Activated naive CD4-positive, alpha-beta T cell treated with anti-CD3 and anti-CD28 coated beads for 36 hours (primary cell): ENCODE measurements at regions of chr7 and their contacts with region 1.

Region 1: GRCh38 chr7:103074519-103075336 is at the starts of genes ARMC10 and FBXL13:
- DNase-seq: peak; percentile 92
- H3K4me3 Mint-ChIP-seq: peak within 1 kb of the TSS; percentile 91
- H3K27ac Mint-ChIP-seq: peak within 1 kb of the TSS; percentile 90
- H3K4me1 Mint-ChIP-seq: peaks cover 40% of the 10 kb centered on the region
- H3K27me3 Mint-ChIP-seq: no peaks in the 10 kb centered on the region
- total RNA-seq, gene ARMC10: 46.6 to 50.5 TPM
- total RNA-seq, gene FBXL13: 0.54 to 0.74 TPM

Region 2: GRCh38 chr7:103129702-103130549 is 55.2 kb after region 1 on chr7:
- CTCF ChIA-PET with region 1: no interaction called
- intact Hi-C with region 1: no loop called
- DNase-seq: no peak
- H3K4me3 Mint-ChIP-seq: no peak overlapping the region
- H3K27ac Mint-ChIP-seq: no peak overlapping the region
- H3K4me1 Mint-ChIP-seq: peaks cover 10% of the 10 kb centered on the region
- H3K27me3 Mint-ChIP-seq: no peaks in the 10 kb centered on the region

Region 3: GRCh38 chr7:103148994-103149807 is 74.5 kb after region 1 on chr7 and contains the start of gene NAPEPLD:
- CTCF ChIA-PET with region 1: interaction called, 3 read pairs
- intact Hi-C with region 1: loop called (anchors 1 kb)
- DNase-seq: peak; percentile 68
- H3K4me3 Mint-ChIP-seq: peak within 1 kb of the TSS; percentile 96
- H3K27ac Mint-ChIP-seq: peak within 1 kb of the TSS; percentile 97
- H3K4me1 Mint-ChIP-seq: peaks cover 32% of the 10 kb centered on the region
- H3K27me3 Mint-ChIP-seq: no peaks in the 10 kb centered on the region
- total RNA-seq, gene NAPEPLD: 6.3 to 6.8 TPM

Region 4: GRCh38 chr7:103396471-103396870 is 321.7 kb after region 1 on chr7:
- CTCF ChIA-PET with region 1: no interaction called
- intact Hi-C with region 1: loop called (anchors 10 kb)
- DNase-seq: no peak
- H3K4me3 Mint-ChIP-seq: no peak overlapping the region
- H3K27ac Mint-ChIP-seq: no peak overlapping the region
- H3K4me1 Mint-ChIP-seq: no peaks in the 10 kb centered on the region
- H3K27me3 Mint-ChIP-seq: peaks cover 2% of the 10 kb centered on the region

Region 5: DNA sequence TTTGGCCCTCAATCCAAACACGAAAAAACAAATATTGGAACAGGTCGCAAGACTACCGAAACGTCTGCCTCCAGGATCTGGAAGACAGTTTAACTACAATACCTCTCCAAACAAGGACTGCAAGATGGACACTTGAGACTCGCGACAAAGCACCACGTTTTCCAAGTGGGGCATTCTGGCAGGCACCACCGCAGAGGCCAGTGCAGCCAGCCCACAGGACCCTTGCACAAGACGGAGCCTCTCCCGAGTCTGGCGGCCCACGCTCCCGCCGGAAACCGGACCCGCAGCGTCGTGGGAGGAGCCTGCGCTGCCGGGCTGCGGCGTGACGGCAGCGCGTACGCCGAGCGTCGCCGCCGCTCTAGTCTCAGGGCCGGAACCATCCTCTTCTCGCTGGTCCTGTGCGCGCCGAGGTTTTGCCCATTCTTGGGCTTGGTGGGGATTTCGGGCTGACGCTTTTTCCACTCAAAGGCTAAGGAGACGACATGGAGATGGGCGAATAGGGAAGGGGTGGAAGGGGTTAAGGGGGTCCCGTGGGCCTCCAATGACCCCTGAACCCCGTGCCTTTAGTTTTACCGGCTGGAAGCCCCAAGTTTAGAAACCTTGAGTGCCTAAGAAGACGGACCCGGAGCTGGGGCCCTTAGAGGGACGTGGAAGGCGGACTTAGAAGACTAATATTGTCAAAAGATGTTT is 1133.1 kb after region 1 on chr7 and contains the start of gene ORC5:
- CTCF ChIA-PET with region 1: no interaction called
- intact Hi-C with region 1: loop called (anchors 10 kb)
- DNase-seq: peak; percentile 80
- H3K4me3 Mint-ChIP-seq: peak within 1 kb of the TSS; percentile 93
- H3K27ac Mint-ChIP-seq: peak within 1 kb of the TSS; percentile 91
- H3K4me1 Mint-ChIP-seq: peaks cover 28% of the 10 kb centered on the region
- H3K27me3 Mint-ChIP-seq: peaks cover 8% of the 10 kb centered on the region
- total RNA-seq, gene ORC5: 19.9 to 21.2 TPM